T-cell (primary cell): ENCODE measurements at regions of chrX and their contacts with region 1.

Region 1: GRCh38 chrX:107729547-107730297 is 45.9 kb downstream of the TSC22D3 start:
- DNase-seq: no peak
- ATAC-seq: no peak
- H3K4me3 ChIP-seq: no peak overlapping the region
- H3K4me3 Mint-ChIP-seq: no peak overlapping the region
- H3K27ac ChIP-seq: no peak overlapping the region
- H3K27ac Mint-ChIP-seq: no peak overlapping the region
- H3K4me1 ChIP-seq: no peaks in the 10 kb centered on the region
- H3K4me1 Mint-ChIP-seq: peaks cover 0 to 6% (median 6%) of the 10 kb centered on the region in 3 donors
- H3K27me3 ChIP-seq: no peaks in the 10 kb centered on the region
- H3K27me3 Mint-ChIP-seq: peaks cover 0 to 6% of the 10 kb centered on the region in 2 donors

Region 2: GRCh38 chrX:107562482-107562881 is 167.2 kb before region 1 on chrX:
- CTCF ChIA-PET with region 1: no interaction called
- POLR2A ChIA-PET with region 1: no interaction called
- DNase-seq: no peak
- ATAC-seq: no peak
- H3K4me3 ChIP-seq: no peak overlapping the region
- H3K4me3 Mint-ChIP-seq: no peak overlapping the region
- H3K27ac ChIP-seq: no peak overlapping the region
- H3K27ac Mint-ChIP-seq: no peak overlapping the region
- H3K4me1 ChIP-seq: no peaks in the 10 kb centered on the region
- H3K4me1 Mint-ChIP-seq: no peaks in the 10 kb centered on the region
- H3K27me3 ChIP-seq: no peaks in the 10 kb centered on the region
- H3K27me3 Mint-ChIP-seq: peaks cover 16 to 33% of the 10 kb centered on the region in 2 donors

Region 3: GRCh38 chrX:107619885-107620322 is 109.8 kb before region 1 on chrX:
- CTCF ChIA-PET with region 1: no interaction called
- POLR2A ChIA-PET with region 1: interaction called in 1 of 2 experiments, 17 read pairs
- DNase-seq: no peak
- ATAC-seq: no peak
- H3K4me3 ChIP-seq: no peak overlapping the region
- H3K4me3 Mint-ChIP-seq: no peak overlapping the region
- H3K27ac ChIP-seq: no peak overlapping the region
- H3K27ac Mint-ChIP-seq: no peak overlapping the region
- H3K4me1 ChIP-seq: no peaks in the 10 kb centered on the region
- H3K4me1 Mint-ChIP-seq: no peaks in the 10 kb centered on the region
- H3K27me3 ChIP-seq: no peaks in the 10 kb centered on the region
- H3K27me3 Mint-ChIP-seq: peaks cover 0 to 4% of the 10 kb centered on the region in 2 donors